Caco-2 (cell line): ENCODE measurements at regions of chr6 and their contacts with region 1.

Region 1: GRCh38 chr6:95431637-95432228 is 145.6 kb upstream of the MANEA start:
- DNase-seq: peak in 1 of 2 experiments; percentile 55
- H3K4me3 ChIP-seq: no peak overlapping the region
- H3K4me3 Mint-ChIP-seq: no peak overlapping the region
- H3K27ac Mint-ChIP-seq: no peak overlapping the region
- H3K4me1 ChIP-seq: no peaks in the 10 kb centered on the region
- H3K4me1 Mint-ChIP-seq: no peaks in the 10 kb centered on the region
- H3K27me3 ChIP-seq: no peaks in the 10 kb centered on the region
- H3K27me3 Mint-ChIP-seq: no peaks in the 10 kb centered on the region
- CTCF ChIP-seq: peak; percentile 57 to 71

Region 2: GRCh38 chr6:94988701-94989100 is 443.0 kb before region 1 on chr6:
- CTCF ChIA-PET with region 1: no interaction called
- POLR2A ChIA-PET with region 1: no interaction called
- intact Hi-C with region 1: no loop called
- DNase-seq: no peak
- H3K4me3 ChIP-seq: no peak overlapping the region
- H3K4me3 Mint-ChIP-seq: no peak overlapping the region
- H3K27ac Mint-ChIP-seq: no peak overlapping the region
- H3K4me1 ChIP-seq: no peaks in the 10 kb centered on the region
- H3K4me1 Mint-ChIP-seq: no peaks in the 10 kb centered on the region
- H3K27me3 ChIP-seq: no peaks in the 10 kb centered on the region
- H3K27me3 Mint-ChIP-seq: no peaks in the 10 kb centered on the region
- CTCF ChIP-seq: no peak

Region 3: DNA sequence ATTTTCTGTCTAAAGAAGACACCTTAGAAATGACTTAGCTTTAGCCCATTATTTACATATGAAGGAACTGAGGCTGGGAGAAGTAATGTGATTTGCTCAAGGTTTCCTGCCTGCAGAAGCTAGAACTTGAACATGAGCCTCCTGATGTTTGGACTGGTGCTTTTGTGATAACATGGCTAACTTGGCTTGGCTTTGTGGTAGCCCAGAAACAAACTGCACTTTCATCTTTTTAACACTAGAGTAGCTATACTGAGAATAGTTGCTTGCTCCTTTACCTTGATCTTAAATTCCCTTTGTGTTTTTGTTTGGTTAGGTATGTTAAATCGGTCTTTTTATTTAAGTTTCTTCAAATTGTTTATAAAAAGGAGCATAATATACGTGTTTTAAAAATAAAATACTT is 17.9 kb before region 1 on chr6:
- CTCF ChIA-PET with region 1: no interaction called
- POLR2A ChIA-PET with region 1: no interaction called
- intact Hi-C with region 1: no loop called
- DNase-seq: no peak
- H3K4me3 ChIP-seq: no peak overlapping the region
- H3K4me3 Mint-ChIP-seq: no peak overlapping the region
- H3K27ac Mint-ChIP-seq: no peak overlapping the region
- H3K4me1 ChIP-seq: no peaks in the 10 kb centered on the region
- H3K4me1 Mint-ChIP-seq: no peaks in the 10 kb centered on the region
- H3K27me3 ChIP-seq: no peaks in the 10 kb centered on the region
- H3K27me3 Mint-ChIP-seq: no peaks in the 10 kb centered on the region
- CTCF ChIP-seq: no peak

Region 4: DNA sequence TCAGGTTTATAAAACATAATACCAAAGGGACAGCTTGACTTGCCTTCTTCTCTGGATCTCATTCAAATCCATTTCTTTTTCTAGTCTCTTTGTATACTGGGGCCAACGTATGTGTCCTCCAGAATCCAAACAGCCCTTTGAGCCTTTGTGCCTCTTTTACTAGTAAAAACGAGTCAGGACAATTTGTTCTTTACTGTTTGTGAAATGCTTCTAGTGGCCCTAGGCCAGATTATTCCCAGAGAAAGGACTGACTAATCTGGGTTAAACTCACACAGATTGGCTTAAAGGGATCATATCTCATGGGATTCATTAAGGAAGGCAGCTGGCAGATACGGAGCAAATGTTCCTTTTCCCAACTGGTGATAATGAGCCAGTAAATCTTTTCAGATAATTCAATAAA is 113.5 kb after region 1 on chr6:
- CTCF ChIA-PET with region 1: no interaction called
- POLR2A ChIA-PET with region 1: no interaction called
- intact Hi-C with region 1: loop called (anchors 10 kb)
- DNase-seq: no peak
- H3K4me3 ChIP-seq: no peak overlapping the region
- H3K4me3 Mint-ChIP-seq: no peak overlapping the region
- H3K27ac Mint-ChIP-seq: no peak overlapping the region
- H3K4me1 ChIP-seq: no peaks in the 10 kb centered on the region
- H3K4me1 Mint-ChIP-seq: peaks cover 9% of the 10 kb centered on the region
- H3K27me3 ChIP-seq: no peaks in the 10 kb centered on the region
- H3K27me3 Mint-ChIP-seq: no peaks in the 10 kb centered on the region
- CTCF ChIP-seq: no peak

Region 5: DNA sequence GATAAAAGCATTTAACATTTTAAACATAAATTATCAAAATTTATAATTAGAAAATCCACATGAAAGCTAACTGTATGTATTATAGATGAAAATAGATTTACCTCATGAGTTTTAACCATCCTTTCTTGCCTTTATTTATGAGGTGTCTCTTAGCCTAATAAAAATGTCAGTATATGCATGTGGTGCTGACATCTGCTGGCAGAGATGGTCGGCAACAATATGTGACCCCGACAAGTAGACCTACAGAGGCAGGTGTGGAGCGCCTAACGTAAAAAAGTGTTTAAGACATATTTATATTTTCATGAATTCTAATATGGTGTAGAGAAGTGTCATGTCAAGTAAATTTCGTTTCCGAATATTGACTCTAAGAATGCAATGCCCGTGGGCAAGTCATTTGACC is 435.0 kb after region 1 on chr6:
- CTCF ChIA-PET with region 1: no interaction called
- POLR2A ChIA-PET with region 1: no interaction called
- intact Hi-C with region 1: loop called (anchors 1 kb)
- DNase-seq: peak; percentile 39 to 43
- H3K4me3 ChIP-seq: no peak overlapping the region
- H3K4me3 Mint-ChIP-seq: no peak overlapping the region
- H3K27ac Mint-ChIP-seq: no peak overlapping the region
- H3K4me1 ChIP-seq: no peaks in the 10 kb centered on the region
- H3K4me1 Mint-ChIP-seq: peaks cover 7% of the 10 kb centered on the region
- H3K27me3 ChIP-seq: no peaks in the 10 kb centered on the region
- H3K27me3 Mint-ChIP-seq: no peaks in the 10 kb centered on the region
- CTCF ChIP-seq: peak; percentile 50 to 54

Region 6: DNA sequence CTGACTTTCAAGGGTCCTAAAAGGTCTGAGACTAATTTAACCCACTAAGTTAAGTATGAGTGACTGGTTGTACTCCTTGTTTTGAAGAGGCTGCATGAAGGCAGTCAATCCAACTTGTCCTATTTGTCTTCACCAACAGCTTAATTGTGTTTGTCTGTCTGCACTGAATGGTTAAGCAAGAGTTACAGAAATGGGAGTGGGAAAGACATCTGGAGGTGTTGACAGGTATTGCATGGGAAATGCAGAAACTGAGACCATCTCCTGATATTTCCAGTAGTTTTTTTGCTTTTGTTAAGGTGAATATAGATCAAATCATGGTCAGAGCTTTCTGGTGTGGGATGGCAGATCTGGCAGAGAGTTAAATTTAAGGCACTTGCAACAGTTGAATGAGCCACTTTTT is 590.5 kb after region 1 on chr6:
- CTCF ChIA-PET with region 1: no interaction called
- POLR2A ChIA-PET with region 1: no interaction called
- intact Hi-C with region 1: loop called (anchors 1 kb)
- DNase-seq: peak in 1 of 2 experiments; percentile 5
- H3K4me3 ChIP-seq: no peak overlapping the region
- H3K4me3 Mint-ChIP-seq: no peak overlapping the region
- H3K27ac Mint-ChIP-seq: no peak overlapping the region
- H3K4me1 ChIP-seq: no peaks in the 10 kb centered on the region
- H3K4me1 Mint-ChIP-seq: no peaks in the 10 kb centered on the region
- H3K27me3 ChIP-seq: no peaks in the 10 kb centered on the region
- H3K27me3 Mint-ChIP-seq: no peaks in the 10 kb centered on the region
- CTCF ChIP-seq: peak; percentile 34 to 40